Ovary (tissue), 10 donors: ENCODE measurements at regions of chr17 and their contacts with region 1.

Region 1: GRCh38 chr17:1186923-1187771 is 7.4 kb upstream of the ABR start:
- DNase-seq: peak; percentile 83 to 91 (median 88)
- H3K4me3 ChIP-seq: no peak overlapping the region
- H3K27ac ChIP-seq: peak overlapping the region; percentile 16 to 26
- H3K4me1 ChIP-seq: peaks cover 5% of the 10 kb centered on the region
- H3K27me3 ChIP-seq: no peaks in the 10 kb centered on the region
- CTCF ChIP-seq: peak; percentile 94 to 99 (median 99)
- EP300 ChIP-seq: no peak
- POLR2A ChIP-seq: no peak

Region 2: GRCh38 chr17:1122533-1123392 is 64.4 kb before region 1 on chr17:
- intact Hi-C with region 1: loop called (anchors 2 to 5 kb)
- DNase-seq: peak; percentile 84 to 93 (median 91)
- H3K4me3 ChIP-seq: no peak overlapping the region
- H3K27ac ChIP-seq: peak overlapping the region in 1 of 2 donors; percentile 47
- H3K4me1 ChIP-seq: peaks cover 9% of the 10 kb centered on the region
- H3K27me3 ChIP-seq: no peaks in the 10 kb centered on the region
- CTCF ChIP-seq: peak; percentile 92 to 94 (median 93)
- EP300 ChIP-seq: no peak
- POLR2A ChIP-seq: no peak

Region 3: DNA sequence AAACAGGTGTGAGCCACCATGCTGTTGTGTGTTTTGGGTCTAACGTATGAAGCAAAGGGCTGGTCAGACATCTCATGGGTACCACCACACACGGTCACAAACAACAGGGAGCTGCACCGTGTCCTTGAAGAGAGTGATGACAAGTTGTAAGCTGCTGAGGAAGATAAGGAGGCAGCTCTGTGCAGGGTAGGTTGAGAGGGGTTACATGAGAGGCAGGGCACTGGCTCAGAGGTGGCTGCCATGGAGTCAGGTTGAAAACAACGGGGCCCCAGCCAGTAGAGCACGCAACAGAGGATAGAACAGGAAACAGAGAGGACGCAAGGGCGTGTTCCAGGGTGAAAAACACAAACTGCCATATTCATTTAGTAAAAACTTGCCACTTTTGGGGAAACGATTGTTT is 144.6 kb after region 1 on chr17:
- intact Hi-C with region 1: no loop called
- DNase-seq: peak in 1 of 5 donors; percentile 16
- H3K4me3 ChIP-seq: no peak overlapping the region
- H3K27ac ChIP-seq: no peak overlapping the region
- H3K4me1 ChIP-seq: no peaks in the 10 kb centered on the region
- H3K27me3 ChIP-seq: no peaks in the 10 kb centered on the region
- CTCF ChIP-seq: no peak
- EP300 ChIP-seq: no peak
- POLR2A ChIP-seq: no peak

Region 4: DNA sequence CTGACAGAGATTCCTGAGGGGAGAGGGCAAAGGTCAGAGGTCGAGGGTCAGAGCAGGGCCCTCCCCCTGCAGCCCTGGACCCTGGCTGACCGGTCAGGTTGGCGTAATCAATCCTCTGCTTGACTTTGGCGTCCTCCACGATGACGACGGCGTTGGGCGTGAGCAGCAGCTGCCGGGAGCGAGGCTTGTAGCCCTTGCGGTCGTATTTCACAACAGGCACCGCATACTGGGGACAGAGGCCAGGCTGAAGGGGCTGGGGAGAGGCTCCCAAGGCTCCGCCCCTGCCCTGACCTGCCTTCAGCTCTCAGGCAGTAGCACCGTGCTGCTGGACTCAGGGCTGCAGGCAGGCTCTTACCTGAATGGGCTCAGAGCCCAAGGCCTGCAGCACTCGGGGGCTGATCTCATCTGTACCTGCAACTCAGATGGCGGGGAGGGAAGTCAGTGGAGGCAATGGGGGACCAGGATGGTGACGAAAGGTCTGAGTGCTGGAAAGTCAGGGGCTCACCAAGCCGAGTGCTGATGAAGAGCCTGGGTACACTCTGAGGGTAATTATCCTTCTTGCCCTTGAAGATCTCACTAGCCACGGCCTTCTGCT is 280.8 kb after region 1 on chr17:
- intact Hi-C with region 1: loop called in 1 of 4 experiments (anchors 5 kb)
- DNase-seq: peak in 1 of 5 donors; percentile 43
- H3K4me3 ChIP-seq: no peak overlapping the region
- H3K27ac ChIP-seq: no peak overlapping the region
- H3K4me1 ChIP-seq: no peaks in the 10 kb centered on the region
- H3K27me3 ChIP-seq: no peaks in the 10 kb centered on the region
- CTCF ChIP-seq: no peak
- EP300 ChIP-seq: no peak
- POLR2A ChIP-seq: no peak